Heart right ventricle (tissue), 16 donors: ENCODE measurements at regions of chr1 and their contacts with region 1.

Region 1: DNA sequence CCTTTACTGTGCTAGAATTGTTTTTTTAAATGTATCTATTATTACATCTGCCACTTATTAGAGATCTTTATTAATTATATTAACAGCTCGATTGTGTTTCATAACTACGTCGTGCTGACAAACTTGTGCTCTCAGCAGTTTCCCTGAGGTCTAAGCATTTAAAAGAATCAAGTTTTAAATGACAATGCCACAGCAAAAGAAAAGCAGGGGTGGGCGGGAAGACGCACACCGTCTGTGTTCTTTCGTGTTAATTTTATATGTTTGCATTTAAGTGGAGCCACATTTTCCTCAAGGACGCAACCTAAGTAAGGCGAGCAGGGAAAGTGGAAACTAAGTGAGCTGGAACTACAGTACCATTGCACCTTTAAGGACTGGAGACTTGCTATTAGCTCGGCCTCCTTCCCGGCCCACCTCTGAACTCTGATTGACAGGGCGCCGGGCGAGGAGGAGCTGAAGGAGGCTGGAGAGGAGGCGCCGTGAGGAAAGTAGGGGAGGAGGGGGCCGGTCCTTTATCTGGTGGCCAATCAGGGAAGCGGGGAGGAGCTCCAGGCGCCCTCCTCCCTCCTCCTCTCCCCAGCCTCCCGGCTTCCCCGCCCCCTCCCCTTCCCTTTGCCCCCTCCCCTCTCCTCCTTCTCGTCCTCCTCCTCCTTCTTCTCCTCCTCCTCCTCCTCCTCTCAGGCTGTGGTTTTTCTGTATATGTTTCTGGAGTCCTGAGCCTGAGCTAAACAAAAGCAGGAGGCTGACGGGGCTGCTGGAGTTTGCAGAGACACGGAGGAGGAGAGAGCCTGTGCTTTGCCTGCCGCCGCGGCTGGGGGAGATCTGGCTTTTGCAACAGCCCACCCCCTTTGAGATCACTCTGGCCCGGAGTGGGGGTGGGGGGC is at the start of gene PBX1:
- DNase-seq: peak; percentile 96 to 98
- ATAC-seq: peak; percentile 97 to 100 (median 99)
- H3K4me3 ChIP-seq: peak within 1 kb of the TSS; percentile 55 to 79 (median 73)
- H3K27ac ChIP-seq: peak within 1 kb of the TSS; percentile 46 to 91 (median 84)
- H3K4me1 ChIP-seq: peaks cover 0 to 12% (median 8%) of the 10 kb centered on the region in 9 donors
- H3K27me3 ChIP-seq: peaks cover 0 to 15% (median 0%) of the 10 kb centered on the region in 7 donors
- CTCF ChIP-seq: no peak
- total RNA-seq, gene PBX1: 53.3 to 91.8 (median 64.4) TPM

Region 2: GRCh38 chr1:164440232-164440631 is 118.5 kb before region 1 on chr1:
- intact Hi-C with region 1: loop called in 1 of 10 experiments (anchors 10 kb)
- DNase-seq: peak in 1 of 2 donors; percentile 56
- ATAC-seq: peak; percentile 88 to 100 (median 98)
- H3K4me3 ChIP-seq: no peak overlapping the region
- H3K27ac ChIP-seq: peak overlapping the region in 1 of 10 donors; percentile 3
- H3K4me1 ChIP-seq: peaks cover 0 to 20% (median 3%) of the 10 kb centered on the region in 9 donors
- H3K27me3 ChIP-seq: no peaks in the 10 kb centered on the region
- CTCF ChIP-seq: peak in 8 of 9 donors; percentile 44 to 70 (median 56)

Region 3: GRCh38 chr1:164611754-164612642 is 53.3 kb after region 1 on chr1:
- intact Hi-C with region 1: loop called in 5 of 10 experiments (anchors 5 to 10 kb)
- DNase-seq: peak in 1 of 2 donors; percentile 33
- ATAC-seq: peak; percentile 49 to 73 (median 64)
- H3K4me3 ChIP-seq: no peak overlapping the region
- H3K27ac ChIP-seq: peak overlapping the region in 8 of 10 donors; percentile 3 to 76 (median 50)
- H3K4me1 ChIP-seq: peaks cover 6 to 97% (median 71%) of the 10 kb centered on the region in 9 donors
- H3K27me3 ChIP-seq: no peaks in the 10 kb centered on the region
- CTCF ChIP-seq: no peak

Region 4: GRCh38 chr1:164707868-164708331 is 149.2 kb after region 1 on chr1:
- intact Hi-C with region 1: loop called in 2 of 10 experiments (anchors 5 to 10 kb)
- DNase-seq: no peak
- ATAC-seq: peak in 6 of 8 donors; percentile 22 to 79 (median 55)
- H3K4me3 ChIP-seq: no peak overlapping the region
- H3K27ac ChIP-seq: peak overlapping the region in 9 of 10 donors; percentile 10 to 71 (median 66)
- H3K4me1 ChIP-seq: peaks cover 19 to 89% (median 66%) of the 10 kb centered on the region in 9 donors
- H3K27me3 ChIP-seq: peaks cover 0 to 5% (median 0%) of the 10 kb centered on the region in 7 donors
- CTCF ChIP-seq: no peak

Region 5: DNA sequence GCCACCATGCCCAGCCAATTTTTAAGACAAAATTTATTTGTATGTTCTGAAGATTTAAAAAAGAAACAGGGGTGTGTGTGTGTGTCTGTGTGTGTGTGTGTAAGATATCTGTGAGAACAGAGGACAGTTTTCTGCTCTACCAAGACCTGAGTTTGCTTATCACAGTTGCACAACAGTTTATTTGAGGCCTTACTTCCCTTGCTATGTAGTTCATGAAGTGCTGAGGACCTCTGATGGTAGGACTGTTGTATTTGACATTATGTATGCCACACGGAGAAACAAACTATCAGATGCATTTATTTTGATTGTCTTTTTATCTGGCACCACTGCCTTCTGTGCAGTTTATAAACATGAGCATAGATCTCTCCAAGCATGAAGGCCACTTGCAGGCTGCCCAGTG is 355.5 kb after region 1 on chr1:
- intact Hi-C with region 1: loop called in 1 of 10 experiments (anchors 10 kb)
- DNase-seq: no peak
- ATAC-seq: peak; percentile 66 to 88 (median 76)
- H3K4me3 ChIP-seq: no peak overlapping the region
- H3K27ac ChIP-seq: no peak overlapping the region
- H3K4me1 ChIP-seq: peaks cover 0 to 10% (median 0%) of the 10 kb centered on the region in 9 donors
- H3K27me3 ChIP-seq: no peaks in the 10 kb centered on the region
- CTCF ChIP-seq: peak in 8 of 9 donors; percentile 21 to 58 (median 43)